ENCODE measurements at regions of chr5 and their contacts with region 1.

Region 1: GRCh38 chr5:158119961-158120723 is 261.2 kb upstream of the CLINT1 start:
- DNase-seq: peak; percentile 83
- H3K4me3 ChIP-seq: no peak overlapping the region
- H3K27ac ChIP-seq: peak overlapping the region; percentile 49
- H3K4me1 ChIP-seq: no peaks in the 10 kb centered on the region
- H3K27me3 ChIP-seq: no peaks in the 10 kb centered on the region
- CTCF ChIP-seq: no peak
- POLR2A ChIP-seq: no peak

Region 2: DNA sequence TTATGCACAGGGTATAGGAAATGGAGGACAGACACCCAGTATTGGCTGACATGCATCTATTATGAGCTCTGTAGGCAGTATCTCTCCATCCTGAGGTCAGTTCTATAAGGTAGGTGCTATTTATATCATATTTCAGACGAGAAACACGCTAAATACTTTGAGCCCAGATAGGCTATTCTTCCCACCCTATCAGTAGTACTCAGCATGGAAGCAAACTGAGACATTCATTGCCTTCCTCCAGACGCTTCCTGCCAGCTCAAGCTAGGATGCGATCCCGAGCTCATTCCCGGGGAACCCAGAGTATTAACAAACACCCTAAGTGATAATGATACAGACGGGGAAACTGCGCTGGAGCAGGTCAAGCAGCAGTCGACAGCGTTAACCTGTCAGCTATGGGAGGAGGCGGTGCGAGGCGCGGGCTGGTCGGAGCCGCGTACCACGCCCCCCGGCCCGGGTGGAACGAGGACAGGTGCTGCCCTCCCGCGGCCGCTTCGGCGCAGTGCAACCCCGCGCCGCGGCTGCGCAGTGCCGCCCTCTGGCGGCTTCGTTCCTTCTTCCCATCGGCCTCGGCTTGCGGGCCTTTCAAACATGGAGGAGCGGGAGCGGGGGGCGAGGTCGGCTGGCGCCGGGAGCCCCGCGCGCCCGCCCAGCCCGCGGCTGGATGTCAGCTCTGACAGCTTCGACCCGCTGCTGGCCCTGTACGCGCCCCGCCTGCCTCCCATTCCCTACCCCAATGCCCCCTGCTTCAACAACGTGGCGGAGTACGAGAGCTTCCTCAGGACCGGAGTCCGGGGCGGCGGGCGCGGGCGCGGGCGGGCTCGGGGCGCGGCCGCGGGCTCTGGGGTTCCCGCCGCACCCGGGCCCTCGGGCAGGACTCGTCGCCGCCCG is 376.7 kb before region 1 on chr5 and contains the start of gene LSM11:
- CTCF ChIA-PET with region 1: no interaction called
- POLR2A ChIA-PET with region 1: no interaction called
- dilution Hi-C with region 1: no loop called
- intact Hi-C with region 1: no loop called
- DNase-seq: peak; percentile 93
- H3K4me3 ChIP-seq: peak within 1 kb of the TSS; percentile 57 to 67 (median 67)
- H3K27ac ChIP-seq: peak within 1 kb of the TSS; percentile 58
- H3K4me1 ChIP-seq: peaks cover 14% of the 10 kb centered on the region
- H3K27me3 ChIP-seq: no peaks in the 10 kb centered on the region
- CTCF ChIP-seq: peak; percentile 99
- POLR2A ChIP-seq: no peak
- total RNA-seq, gene LSM11: 6.1 and 7.3 TPM in 2 replicates

Region 3: GRCh38 chr5:158133369-158133768 is 13.2 kb after region 1 on chr5:
- CTCF ChIA-PET with region 1: interaction called, 4 read pairs
- POLR2A ChIA-PET with region 1: no interaction called
- dilution Hi-C with region 1: no loop called
- intact Hi-C with region 1: loop called (anchors 1 kb)
- DNase-seq: peak; percentile 62
- H3K4me3 ChIP-seq: no peak overlapping the region
- H3K27ac ChIP-seq: no peak overlapping the region
- H3K4me1 ChIP-seq: no peaks in the 10 kb centered on the region
- H3K27me3 ChIP-seq: no peaks in the 10 kb centered on the region
- CTCF ChIP-seq: no peak
- POLR2A ChIP-seq: no peak